Esophagus muscularis mucosa (tissue), 4 donors: ENCODE measurements at regions of chrX and their contacts with region 1.

Region 1: GRCh38 chrX:20437683-20438082 is 171.0 kb upstream of the RPS6KA3 start:
- DNase-seq: no peak
- H3K4me3 ChIP-seq: no peak overlapping the region
- H3K27ac ChIP-seq: no peak overlapping the region
- H3K4me1 ChIP-seq: no peaks in the 10 kb centered on the region
- H3K27me3 ChIP-seq: no peaks in the 10 kb centered on the region
- CTCF ChIP-seq: no peak
- EP300 ChIP-seq: no peak
- POLR2A ChIP-seq: no peak

Region 2: DNA sequence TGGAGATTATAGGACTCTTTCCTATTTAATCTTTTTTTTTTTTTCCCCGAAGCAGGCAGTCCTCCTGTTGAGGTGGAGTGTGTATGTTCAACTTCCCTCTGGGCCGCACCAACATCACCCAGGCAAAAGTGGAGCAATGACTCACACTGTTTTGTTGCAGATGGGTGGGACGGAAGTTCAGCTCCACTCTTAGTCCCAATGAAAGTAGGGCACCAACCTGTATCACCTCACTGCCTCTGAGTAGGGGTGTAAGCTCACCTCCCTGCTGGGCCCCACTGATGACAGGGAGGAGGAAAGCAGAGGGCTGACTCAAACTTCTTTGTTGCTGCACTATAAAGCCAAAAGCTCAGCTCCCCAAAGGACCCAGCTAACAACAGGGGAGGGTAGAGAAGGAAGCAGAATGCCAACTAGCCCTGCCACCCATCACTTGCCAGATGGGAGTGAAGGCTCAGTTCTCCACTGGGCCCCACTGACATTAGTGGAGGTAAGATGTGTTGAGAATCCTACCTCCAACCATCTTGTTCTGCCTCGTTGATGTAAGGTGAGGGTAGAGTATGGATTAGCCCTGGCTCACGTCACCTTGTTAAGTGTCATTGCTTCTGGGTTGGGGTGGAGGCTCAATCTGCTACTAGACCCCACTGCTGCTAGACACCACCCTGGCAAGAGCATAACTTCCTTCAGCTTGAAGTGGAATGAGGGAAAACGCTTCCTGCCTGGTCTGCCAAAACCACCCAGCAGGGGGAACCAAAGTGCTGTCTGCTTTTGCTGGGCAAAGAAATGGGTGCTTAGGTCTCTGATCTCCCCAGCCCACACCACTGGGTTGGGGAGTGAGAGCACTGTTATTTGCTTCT is 185.1 kb before region 1 on chrX:
- intact Hi-C with region 1: loop called (anchors 10 kb)
- DNase-seq: no peak
- H3K4me3 ChIP-seq: no peak overlapping the region
- H3K27ac ChIP-seq: no peak overlapping the region
- H3K4me1 ChIP-seq: no peaks in the 10 kb centered on the region
- H3K27me3 ChIP-seq: no peaks in the 10 kb centered on the region
- CTCF ChIP-seq: peak; percentile 32 to 58 (median 43)
- EP300 ChIP-seq: no peak
- POLR2A ChIP-seq: no peak